ENCODE measurements at regions of chr7 and their contacts with region 1.

Region 1: GRCh38 chr7:86926732-86927131 is 132.7 kb downstream of the ELAPOR2 start:
- DNase-seq: no peak
- H3K4me3 Mint-ChIP-seq: no peak overlapping the region
- H3K27ac Mint-ChIP-seq: no peak overlapping the region
- H3K4me1 Mint-ChIP-seq: peaks cover 4% of the 10 kb centered on the region
- H3K27me3 Mint-ChIP-seq: no peaks in the 10 kb centered on the region

Region 2: DNA sequence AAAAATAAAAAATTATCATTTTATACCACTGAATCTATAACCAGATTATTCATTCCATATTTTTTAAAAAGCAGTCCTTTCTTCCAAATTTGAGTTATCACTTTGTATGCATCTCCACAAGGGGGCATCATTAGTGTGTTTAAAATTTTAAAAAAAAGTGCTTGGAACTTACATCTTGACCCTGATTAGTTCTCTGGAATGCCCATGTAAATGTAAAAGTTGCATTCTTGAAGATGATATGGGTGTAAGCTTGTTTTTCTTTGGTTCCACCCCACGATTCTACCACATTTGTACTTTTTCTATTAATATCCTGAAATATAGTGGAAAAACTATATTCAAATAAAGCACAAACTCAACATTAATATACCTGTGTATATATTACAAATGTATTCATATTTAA is 12.2 kb before region 1 on chr7:
- CTCF ChIA-PET with region 1: interaction called, 22 read pairs
- POLR2A ChIA-PET with region 1: no interaction called
- intact Hi-C with region 1: no loop called
- DNase-seq: no peak
- H3K4me3 Mint-ChIP-seq: no peak overlapping the region
- H3K27ac Mint-ChIP-seq: no peak overlapping the region
- H3K4me1 Mint-ChIP-seq: peaks cover 7% of the 10 kb centered on the region
- H3K27me3 Mint-ChIP-seq: no peaks in the 10 kb centered on the region

Region 3: DNA sequence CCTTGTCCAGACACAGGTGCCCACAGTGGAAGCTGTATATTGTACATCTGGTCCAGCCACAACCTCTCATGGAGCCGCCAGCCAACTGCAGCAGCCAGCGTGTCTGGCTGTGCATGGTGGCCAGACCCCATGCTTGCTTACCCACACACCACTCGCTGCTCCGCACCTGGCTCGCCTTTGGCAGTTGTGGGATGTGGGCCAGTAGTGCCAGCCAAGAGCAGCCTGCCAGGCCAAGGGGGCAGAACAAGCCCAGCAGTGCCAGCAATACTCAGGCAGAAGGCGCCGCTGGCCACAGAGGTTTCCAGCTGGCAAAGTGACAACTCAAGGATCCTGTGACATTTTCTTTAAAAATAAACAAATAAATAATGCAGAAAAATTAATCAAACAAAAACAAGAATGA is 304.5 kb after region 1 on chr7:
- CTCF ChIA-PET with region 1: interaction called, 37 read pairs
- POLR2A ChIA-PET with region 1: no interaction called
- intact Hi-C with region 1: no loop called
- DNase-seq: no peak
- H3K4me3 Mint-ChIP-seq: no peak overlapping the region
- H3K27ac Mint-ChIP-seq: no peak overlapping the region
- H3K4me1 Mint-ChIP-seq: peaks cover 8% of the 10 kb centered on the region
- H3K27me3 Mint-ChIP-seq: no peaks in the 10 kb centered on the region